Common myeloid progenitor, CD34-positive (primary cell): ENCODE measurements at regions of chr6 and their contacts with region 1.

Region 1: GRCh38 chr6:109526905-109527628 is 44.0 kb upstream of the ZBTB24 start:
- DNase-seq: peak; percentile 74 to 84 (median 78)
- H3K4me3 ChIP-seq: no peak overlapping the region
- H3K27ac ChIP-seq: no peak overlapping the region
- H3K4me1 ChIP-seq: no peaks in the 10 kb centered on the region
- H3K27me3 ChIP-seq: no peaks in the 10 kb centered on the region

Region 2: GRCh38 chr6:108732136-108732885 is 794.8 kb before region 1 on chr6:
- CTCF ChIA-PET with region 1: no interaction called
- POLR2A ChIA-PET with region 1: no interaction called
- DNase-seq: no peak
- H3K4me3 ChIP-seq: no peak overlapping the region
- H3K27ac ChIP-seq: no peak overlapping the region
- H3K4me1 ChIP-seq: peaks cover 0 to 8% (median under 1%) of the 10 kb centered on the region in 4 experiments
- H3K27me3 ChIP-seq: no peaks in the 10 kb centered on the region

Region 3: GRCh38 chr6:110053395-110054240 is 526.6 kb after region 1 on chr6:
- CTCF ChIA-PET with region 1: interaction called, 11 read pairs
- POLR2A ChIA-PET with region 1: no interaction called
- DNase-seq: peak; percentile 52 to 73 (median 69)
- H3K4me3 ChIP-seq: no peak overlapping the region
- H3K27ac ChIP-seq: no peak overlapping the region
- H3K4me1 ChIP-seq: peaks cover 0 to 8% (median 3%) of the 10 kb centered on the region in 4 experiments
- H3K27me3 ChIP-seq: no peaks in the 10 kb centered on the region